Sigmoid colon (tissue), 7 donors: ENCODE measurements at regions of chr19 and their contacts with region 1.

Region 1: DNA sequence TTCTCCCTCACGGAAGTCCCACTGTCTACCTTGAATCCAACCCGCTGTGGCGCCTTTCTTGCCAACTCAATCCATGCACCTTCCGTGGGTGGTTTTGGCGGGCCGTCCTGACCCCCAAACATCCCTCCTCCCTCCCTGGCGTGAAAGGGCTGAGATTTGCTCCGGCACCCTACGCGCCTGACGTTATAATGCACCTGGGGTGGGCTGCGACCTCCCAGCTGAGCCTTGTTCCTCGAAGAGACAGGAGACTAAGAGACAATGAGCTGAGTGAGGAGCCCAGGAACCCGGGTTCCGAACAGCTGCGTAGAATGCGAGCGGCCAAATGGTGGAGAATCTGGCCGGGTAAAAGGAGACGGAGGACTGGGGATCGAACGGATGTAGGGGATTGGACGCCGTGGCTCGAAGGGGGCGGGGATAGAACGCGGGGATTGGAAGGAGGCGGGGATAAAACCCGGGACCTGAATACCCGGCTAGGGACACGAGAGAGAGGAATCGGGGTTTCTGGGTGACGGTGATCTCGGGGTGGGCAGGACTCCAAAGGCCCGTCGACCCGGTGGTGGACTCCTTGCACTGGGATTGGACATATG is at the start of gene CPT1C:
- DNase-seq: peak; percentile 93
- H3K4me3 ChIP-seq: peak within 1 kb of the TSS; percentile 32 to 46 (median 39)
- H3K27ac ChIP-seq: peak within 1 kb of the TSS; percentile 58 to 70 (median 60)
- H3K4me1 ChIP-seq: peaks cover 0 to 31% (median 26%) of the 10 kb centered on the region in 4 donors
- H3K27me3 ChIP-seq: peaks cover 4 to 35% (median 31%) of the 10 kb centered on the region in 3 donors
- CTCF ChIP-seq: no peak
- EP300 ChIP-seq: no peak
- POLR2A ChIP-seq: no peak
- total RNA-seq, gene CPT1C: 3.6 to 28.5 (median 4.3) TPM

Region 2: GRCh38 chr19:49655570-49656455 is 34.9 kb before region 1 on chr19:
- intact Hi-C with region 1: no loop called
- DNase-seq: no peak
- H3K4me3 ChIP-seq: no peak overlapping the region
- H3K27ac ChIP-seq: no peak overlapping the region
- H3K4me1 ChIP-seq: no peaks in the 10 kb centered on the region
- H3K27me3 ChIP-seq: no peaks in the 10 kb centered on the region
- CTCF ChIP-seq: no peak
- EP300 ChIP-seq: no peak
- POLR2A ChIP-seq: no peak

Region 3: GRCh38 chr19:49727217-49728030 is 36.7 kb after region 1 on chr19:
- intact Hi-C with region 1: no loop called
- DNase-seq: peak; percentile 72
- H3K4me3 ChIP-seq: no peak overlapping the region
- H3K27ac ChIP-seq: peak overlapping the region in 3 of 4 donors; percentile 28 to 47 (median 45)
- H3K4me1 ChIP-seq: no peaks in the 10 kb centered on the region
- H3K27me3 ChIP-seq: no peaks in the 10 kb centered on the region
- CTCF ChIP-seq: no peak
- EP300 ChIP-seq: no peak
- POLR2A ChIP-seq: no peak

Region 4: DNA sequence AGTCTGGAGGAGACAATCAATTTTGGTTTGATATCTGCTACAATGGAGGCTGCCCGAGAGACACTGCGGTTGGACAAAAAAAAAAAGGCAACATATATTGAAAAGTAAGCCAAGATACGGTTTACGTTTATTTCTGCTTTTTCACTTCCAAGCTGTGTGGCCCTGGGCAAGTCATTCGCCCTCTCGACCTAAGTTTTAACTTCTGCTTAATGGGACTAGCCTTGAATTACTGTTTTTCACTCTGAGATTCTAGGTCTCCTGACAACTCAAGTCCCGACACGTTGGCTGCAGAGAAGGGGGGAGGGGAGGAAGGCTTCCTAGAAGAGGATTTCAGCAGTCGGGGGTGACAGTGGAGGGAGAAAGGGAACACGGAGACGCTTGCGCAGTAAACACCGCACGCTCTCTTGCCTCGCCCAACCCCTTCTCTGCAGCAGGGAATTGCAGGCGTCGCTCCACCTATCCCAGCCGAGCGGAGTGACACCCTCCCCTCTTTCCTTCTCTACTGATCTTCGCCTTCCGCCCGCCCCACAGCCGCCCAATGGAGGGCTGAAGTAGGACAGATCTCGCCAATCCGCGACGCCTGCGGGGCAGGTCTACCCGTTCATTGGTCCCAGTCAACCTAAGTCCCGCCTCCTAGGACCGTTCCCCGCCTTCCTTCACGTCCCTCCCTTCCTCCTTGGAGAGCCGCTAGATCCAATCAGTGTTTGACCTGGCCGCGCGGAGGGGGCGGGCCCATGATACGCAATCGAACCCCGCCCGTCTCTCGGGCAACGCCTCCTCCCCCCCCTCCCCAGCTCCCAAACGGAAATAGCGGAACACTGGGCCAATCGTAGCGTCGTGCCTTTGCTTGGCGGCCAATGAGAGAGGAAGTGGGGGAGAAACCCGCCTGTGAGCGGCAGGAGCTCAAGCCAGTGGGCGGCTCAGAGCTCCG is 75.5 kb after region 1 on chr19:
- intact Hi-C with region 1: loop called (anchors 2 kb)
- DNase-seq: peak; percentile 100
- H3K4me3 ChIP-seq: peak overlapping the region; percentile 14 to 96 (median 92)
- H3K27ac ChIP-seq: peak overlapping the region; percentile 91 to 96 (median 92)
- H3K4me1 ChIP-seq: peaks cover 0 to 36% (median 27%) of the 10 kb centered on the region in 4 donors
- H3K27me3 ChIP-seq: no peaks in the 10 kb centered on the region
- CTCF ChIP-seq: no peak
- EP300 ChIP-seq: no peak
- POLR2A ChIP-seq: peak; percentile 36 to 39